ENCODE measurements at regions of chr7 and their contacts with region 1.

Region 1: DNA sequence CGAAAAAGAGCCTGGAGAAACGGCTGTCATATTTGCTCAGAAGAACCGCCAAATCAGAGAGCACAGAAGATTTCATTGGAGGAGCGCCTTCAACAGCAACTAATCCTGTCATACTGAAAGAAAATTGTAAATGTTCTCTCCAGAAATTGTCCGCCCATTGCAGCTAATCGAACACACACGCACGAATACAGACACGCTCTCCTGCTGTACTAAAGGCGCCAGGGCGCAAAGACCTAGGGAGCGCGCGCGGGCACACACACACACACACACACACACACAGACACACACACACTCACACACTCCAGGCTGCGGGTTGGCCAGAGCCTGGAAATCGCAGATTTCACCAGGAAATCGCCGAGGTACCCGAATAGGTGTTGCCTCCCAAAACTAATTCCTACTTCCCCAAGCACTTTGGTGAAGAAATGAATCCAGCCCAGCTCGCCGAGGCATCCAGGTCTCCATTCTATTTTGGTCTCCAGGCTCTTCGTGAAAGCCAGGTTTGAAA is at the start of gene CHRM2:
- DNase-seq: no peak
- H3K4me3 ChIP-seq: peak within 1 kb of the TSS; percentile 33 to 49 (median 42)
- H3K27ac ChIP-seq: peak within 1 kb of the TSS; percentile 43 to 86 (median 64)
- H3K4me1 ChIP-seq: peaks cover 0 to 5% (median 0%) of the 10 kb centered on the region in 4 donors
- H3K27me3 ChIP-seq: peaks cover 45% of the 10 kb centered on the region
- CTCF ChIP-seq: no peak
- EP300 ChIP-seq: no peak
- POLR2A ChIP-seq: no peak
- total RNA-seq, gene CHRM2: 6.6 to 29.5 (median 10.7) TPM

Region 2: GRCh38 chr7:136709876-136710275 is 158.7 kb before region 1 on chr7:
- in situ Hi-C with region 1: no loop called
- intact Hi-C with region 1: no loop called
- DNase-seq: no peak
- H3K4me3 ChIP-seq: no peak overlapping the region
- H3K27ac ChIP-seq: no peak overlapping the region
- H3K4me1 ChIP-seq: no peaks in the 10 kb centered on the region
- H3K27me3 ChIP-seq: no peaks in the 10 kb centered on the region
- CTCF ChIP-seq: no peak
- EP300 ChIP-seq: no peak
- POLR2A ChIP-seq: no peak

Region 3: DNA sequence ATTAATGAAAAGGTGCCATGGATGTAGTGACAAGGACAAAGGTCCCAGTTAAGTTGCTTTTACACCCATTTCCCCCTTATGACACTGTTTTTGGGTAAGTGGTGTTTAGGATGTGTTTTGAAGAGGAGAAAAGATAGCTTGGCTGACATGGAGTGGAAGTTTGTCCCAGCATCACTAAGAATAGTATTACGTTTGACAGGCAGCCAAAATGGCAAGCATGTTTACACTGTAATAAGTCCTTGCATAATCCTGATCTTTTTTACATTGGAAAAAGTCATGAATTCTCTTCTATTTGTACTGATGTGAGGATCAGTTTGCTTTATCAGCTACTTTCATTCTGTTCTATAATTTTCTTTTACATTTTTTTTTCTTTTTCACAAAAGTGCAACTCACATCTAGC is 137.7 kb after region 1 on chr7:
- in situ Hi-C with region 1: no loop called
- intact Hi-C with region 1: loop called (anchors 5 kb)
- DNase-seq: no peak
- H3K4me3 ChIP-seq: no peak overlapping the region
- H3K27ac ChIP-seq: peak overlapping the region in 3 of 4 donors; percentile 30 to 65 (median 59)
- H3K4me1 ChIP-seq: peaks cover 0 to 13% (median 2%) of the 10 kb centered on the region in 4 donors
- H3K27me3 ChIP-seq: no peaks in the 10 kb centered on the region
- CTCF ChIP-seq: no peak
- EP300 ChIP-seq: no peak
- POLR2A ChIP-seq: no peak